Activated B cell treated with CpG ODN at 0.5 μM for 24 hours (primary cell): ENCODE measurements at regions of chr1 and their contacts with region 1.

Region 1: DNA sequence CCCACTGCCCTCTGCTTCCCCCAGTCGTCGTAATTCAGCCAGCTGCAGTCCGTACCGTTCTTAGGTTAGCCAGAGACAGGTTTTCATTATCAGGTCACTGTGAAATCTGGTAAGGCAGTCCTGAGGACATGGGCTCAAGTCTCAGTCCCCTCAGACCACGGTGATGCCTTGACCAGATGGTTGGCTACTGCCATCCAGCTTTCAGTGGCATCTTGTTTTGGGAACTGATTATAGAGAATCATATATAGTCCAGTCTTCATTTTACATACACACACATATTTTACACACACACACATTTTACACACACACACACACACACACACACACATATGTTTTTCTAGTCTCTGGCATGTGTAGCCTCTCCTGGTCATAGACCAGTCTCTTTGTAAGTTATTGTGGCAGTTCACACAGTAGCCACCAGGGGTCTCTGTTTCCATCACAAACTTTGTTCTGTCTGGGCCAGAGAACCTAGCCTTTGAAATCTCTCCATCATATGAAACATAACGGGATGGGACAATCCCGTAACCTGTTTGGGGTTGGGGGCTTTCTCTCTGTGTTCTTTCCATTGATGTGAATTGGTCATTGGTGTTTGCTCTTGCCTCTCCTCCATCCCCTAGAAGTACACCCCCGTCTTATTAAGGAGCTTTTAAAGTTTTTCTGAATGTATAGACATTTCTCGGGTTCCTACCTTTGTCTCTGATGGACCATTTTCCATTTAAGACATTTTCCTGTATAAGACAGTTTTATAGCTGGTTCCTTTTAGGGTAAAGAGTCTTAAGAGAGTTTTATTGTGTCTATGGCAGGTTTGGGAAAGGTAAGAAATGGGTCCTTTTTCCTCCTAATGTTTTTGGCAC is 8.4 kb upstream of the IKBKE start:
- DNase-seq: no peak
- ATAC-seq: peak; percentile 87
- H3K4me3 Mint-ChIP-seq: no peak overlapping the region
- H3K27ac Mint-ChIP-seq: no peak overlapping the region
- H3K4me1 Mint-ChIP-seq: peaks cover 17% of the 10 kb centered on the region
- H3K27me3 Mint-ChIP-seq: no peaks in the 10 kb centered on the region
- CTCF ChIP-seq: no peak

Region 2: GRCh38 chr1:206479183-206480125 is 17.6 kb after region 1 on chr1:
- CTCF ChIA-PET with region 1: interaction called, 22 read pairs
- POLR2A ChIA-PET with region 1: interaction called, 3 read pairs
- intact Hi-C with region 1: loop called (anchors 1 kb)
- DNase-seq: no peak
- ATAC-seq: peak; percentile 74
- H3K4me3 Mint-ChIP-seq: no peak overlapping the region
- H3K27ac Mint-ChIP-seq: no peak overlapping the region
- H3K4me1 Mint-ChIP-seq: peaks cover 16% of the 10 kb centered on the region
- H3K27me3 Mint-ChIP-seq: no peaks in the 10 kb centered on the region
- CTCF ChIP-seq: peak; percentile 27

Region 3: GRCh38 chr1:206503591-206504362 is 41.9 kb after region 1 on chr1:
- CTCF ChIA-PET with region 1: no interaction called
- POLR2A ChIA-PET with region 1: no interaction called
- intact Hi-C with region 1: no loop called
- DNase-seq: no peak
- ATAC-seq: no peak
- H3K4me3 Mint-ChIP-seq: no peak overlapping the region
- H3K27ac Mint-ChIP-seq: no peak overlapping the region
- H3K4me1 Mint-ChIP-seq: peaks cover 30% of the 10 kb centered on the region
- H3K27me3 Mint-ChIP-seq: peaks cover 5% of the 10 kb centered on the region
- CTCF ChIP-seq: no peak